ENCODE measurements at regions of chr4 and their contacts with region 1.

Region 1: DNA sequence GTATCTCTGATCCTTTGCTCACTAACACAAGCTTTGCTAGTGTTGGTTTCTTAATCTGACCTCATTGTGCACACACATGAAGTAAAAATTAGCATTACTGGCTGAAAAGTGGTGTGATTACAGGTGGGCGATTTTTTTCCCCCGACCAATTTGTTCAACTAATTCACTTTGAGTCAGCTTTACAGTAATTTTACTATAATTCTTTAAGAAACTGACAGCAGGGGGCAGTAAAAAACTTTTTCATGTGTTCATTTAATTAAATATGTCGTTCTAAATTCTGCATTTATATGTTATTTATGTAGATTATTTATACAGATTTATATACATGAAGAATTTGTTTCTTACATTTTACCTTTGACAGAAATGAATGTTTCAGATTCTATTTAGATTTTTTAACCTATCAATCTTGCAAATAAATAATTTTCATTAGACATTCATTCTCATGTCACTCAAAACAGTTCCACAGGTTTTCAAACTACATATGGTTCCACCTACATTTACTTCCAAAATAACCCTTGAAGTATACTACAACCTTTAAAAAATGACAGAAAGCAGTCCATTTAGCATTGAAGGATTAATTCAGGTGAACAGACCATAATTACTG is 17.5 kb downstream of the PALLD start:
- DNase-seq: peak; percentile 18 to 68 (median 34)
- H3K4me3 ChIP-seq: no peak overlapping the region
- H3K4me3 Mint-ChIP-seq: no peak overlapping the region
- H3K27ac ChIP-seq: no peak overlapping the region
- H3K27ac Mint-ChIP-seq: peak overlapping the region in 2 of 7 donors; percentile 37 to 42
- H3K4me1 ChIP-seq: peaks cover 10 to 12% of the 10 kb centered on the region in 2 donors
- H3K4me1 Mint-ChIP-seq: peaks cover 24% of the 10 kb centered on the region
- H3K27me3 ChIP-seq: no peaks in the 10 kb centered on the region
- H3K27me3 Mint-ChIP-seq: peaks cover 0 to 2% (median 0%) of the 10 kb centered on the region in 3 donors
- CTCF ChIP-seq: peak; percentile 74

Region 2: GRCh38 chr4:167713756-167714155 is 800.6 kb before region 1 on chr4:
- intact Hi-C with region 1: no loop called
- DNase-seq: no peak
- H3K4me3 ChIP-seq: no peak overlapping the region
- H3K4me3 Mint-ChIP-seq: no peak overlapping the region
- H3K27ac ChIP-seq: no peak overlapping the region
- H3K27ac Mint-ChIP-seq: no peak overlapping the region
- H3K4me1 ChIP-seq: no peaks in the 10 kb centered on the region
- H3K4me1 Mint-ChIP-seq: no peaks in the 10 kb centered on the region
- H3K27me3 ChIP-seq: no peaks in the 10 kb centered on the region
- H3K27me3 Mint-ChIP-seq: no peaks in the 10 kb centered on the region
- CTCF ChIP-seq: no peak

Region 3: DNA sequence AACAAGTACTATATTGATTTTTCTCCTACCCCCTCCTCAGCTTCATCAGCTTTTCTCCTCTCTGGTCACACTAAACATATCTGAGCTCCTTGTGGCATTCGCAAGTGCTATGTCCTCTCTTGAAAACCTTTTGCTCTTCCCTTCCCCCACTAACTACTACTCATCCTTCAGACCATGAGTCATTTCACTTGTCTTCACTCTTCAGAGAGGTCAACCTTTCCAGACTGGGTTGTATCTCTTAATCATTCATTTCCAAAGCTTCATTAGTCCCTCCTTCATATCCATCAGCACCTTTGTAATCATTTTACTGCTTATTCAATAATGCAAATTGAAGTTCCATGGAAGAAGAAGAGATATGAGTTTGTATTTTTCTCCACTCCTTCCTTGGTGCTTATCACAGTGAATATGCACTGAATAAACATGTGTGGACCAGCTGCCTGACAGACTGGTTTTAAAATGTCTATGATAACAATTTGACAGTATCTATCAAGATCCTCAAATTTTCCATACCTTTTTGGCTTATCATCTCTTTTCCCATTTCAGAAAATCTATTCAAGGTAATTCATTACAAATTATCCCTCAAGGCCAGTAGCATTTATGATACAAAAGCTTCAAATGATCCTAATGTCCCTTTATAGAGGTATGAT is 62.5 kb before region 1 on chr4:
- intact Hi-C with region 1: loop called in 1 of 2 experiments (anchors 2 kb)
- DNase-seq: peak; percentile 82 to 93 (median 91)
- H3K4me3 ChIP-seq: no peak overlapping the region
- H3K4me3 Mint-ChIP-seq: peak overlapping the region; percentile 9 to 64
- H3K27ac ChIP-seq: peak overlapping the region; percentile 39 to 82
- H3K27ac Mint-ChIP-seq: peak overlapping the region; percentile 89 to 98 (median 96)
- H3K4me1 ChIP-seq: peaks cover 26 to 27% of the 10 kb centered on the region in 2 donors
- H3K4me1 Mint-ChIP-seq: peaks cover 31% of the 10 kb centered on the region
- H3K27me3 ChIP-seq: no peaks in the 10 kb centered on the region
- H3K27me3 Mint-ChIP-seq: no peaks in the 10 kb centered on the region
- CTCF ChIP-seq: no peak

Region 4: DNA sequence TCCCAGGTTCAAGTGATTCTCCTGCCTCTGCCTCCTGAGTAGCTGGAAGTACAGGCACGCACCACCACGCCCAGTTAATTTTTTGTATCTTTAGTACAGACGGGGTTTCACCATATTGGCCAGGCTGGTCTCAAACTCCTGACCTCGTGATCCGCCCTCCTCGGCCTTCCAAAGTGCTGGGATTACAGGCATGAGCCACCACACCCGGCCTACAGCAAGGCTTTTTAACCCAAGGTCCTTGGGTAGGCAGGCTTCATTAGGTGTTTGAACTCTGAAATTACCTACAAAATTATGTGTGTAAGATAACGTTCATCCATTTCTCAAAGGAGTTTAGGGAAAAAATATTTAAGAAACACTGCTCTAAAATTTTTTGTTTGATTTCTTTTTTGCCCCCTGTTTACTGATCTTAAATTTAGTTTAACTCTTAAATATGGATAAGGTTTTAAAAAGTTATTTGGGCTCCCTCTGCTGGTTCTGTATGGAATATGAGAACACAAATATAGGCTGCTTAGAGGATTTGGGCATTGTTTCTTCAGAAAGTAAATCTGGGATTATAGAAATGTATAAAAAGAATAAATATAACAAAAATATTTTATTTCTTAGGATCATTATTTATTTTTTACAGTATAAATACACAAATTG is 402.9 kb after region 1 on chr4:
- intact Hi-C with region 1: loop called in 1 of 2 experiments (anchors 10 kb)
- DNase-seq: peak; percentile 30 to 48 (median 32)
- H3K4me3 ChIP-seq: no peak overlapping the region
- H3K4me3 Mint-ChIP-seq: no peak overlapping the region
- H3K27ac ChIP-seq: no peak overlapping the region
- H3K27ac Mint-ChIP-seq: no peak overlapping the region
- H3K4me1 ChIP-seq: no peaks in the 10 kb centered on the region
- H3K4me1 Mint-ChIP-seq: no peaks in the 10 kb centered on the region
- H3K27me3 ChIP-seq: no peaks in the 10 kb centered on the region
- H3K27me3 Mint-ChIP-seq: no peaks in the 10 kb centered on the region
- CTCF ChIP-seq: peak; percentile 72